WTC11 (cell line): ENCODE measurements at regions of chr17 and their contacts with region 1.

Region 1: DNA sequence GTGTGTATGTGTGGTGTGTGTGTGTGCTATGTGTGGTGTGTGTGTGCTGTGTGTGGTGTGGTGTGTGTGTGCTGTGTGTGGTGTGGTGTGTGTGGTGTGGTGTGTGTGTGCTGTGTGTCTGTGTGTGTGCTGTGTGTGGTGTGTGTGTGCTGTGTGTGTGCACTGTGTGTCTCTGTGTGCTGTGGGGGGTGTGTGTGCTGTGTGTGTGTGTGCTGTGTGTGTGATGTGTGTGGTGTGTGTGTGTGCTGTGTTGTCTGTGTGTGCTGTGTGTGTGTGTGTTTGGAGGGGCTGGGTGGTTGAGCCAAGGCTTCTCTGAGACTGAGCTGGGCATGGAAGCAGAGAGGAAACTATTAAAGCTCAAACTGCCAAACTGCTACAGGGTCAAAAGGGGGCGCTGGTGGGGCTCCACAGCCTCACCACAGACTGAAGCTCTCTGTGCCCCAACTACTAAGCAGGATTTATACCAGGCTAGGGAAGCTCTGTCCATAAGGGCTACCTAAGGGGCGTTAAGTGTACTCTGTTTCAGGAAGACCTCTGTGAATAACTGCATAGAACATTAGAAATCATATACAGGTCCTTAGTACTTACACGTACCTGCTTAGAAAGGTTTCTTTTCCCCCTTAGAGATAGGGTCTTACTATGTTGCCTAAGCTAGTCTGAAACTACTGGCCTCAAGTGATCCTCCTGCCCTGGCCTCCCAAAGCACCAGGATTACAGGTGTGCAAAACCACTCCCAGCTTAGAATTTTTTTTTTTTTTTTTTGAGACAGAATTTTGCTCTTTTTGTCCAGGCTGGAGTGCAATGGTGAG is 27.8 kb upstream of the GHDC start:
- DNase-seq: peak; percentile 61
- ATAC-seq: peak; percentile 93
- H3K4me3 Mint-ChIP-seq: no peak overlapping the region
- H3K27ac Mint-ChIP-seq: no peak overlapping the region
- H3K4me1 Mint-ChIP-seq: no peaks in the 10 kb centered on the region
- H3K27me3 Mint-ChIP-seq: no peaks in the 10 kb centered on the region
- CTCF ChIP-seq: peak; percentile 59; the same call in 1 of the 2 replicates

Region 2: GRCh38 chr17:41894791-41895331 is 327.3 kb before region 1 on chr17:
- CTCF ChIA-PET with region 1: no interaction called
- POLR2A ChIA-PET with region 1: no interaction called
- DNase-seq: no peak
- ATAC-seq: no peak
- H3K4me3 Mint-ChIP-seq: no peak overlapping the region
- H3K27ac Mint-ChIP-seq: no peak overlapping the region
- H3K4me1 Mint-ChIP-seq: no peaks in the 10 kb centered on the region
- H3K27me3 Mint-ChIP-seq: no peaks in the 10 kb centered on the region; the same call in 1 of the 2 replicates
- CTCF ChIP-seq: no peak

Region 3: DNA sequence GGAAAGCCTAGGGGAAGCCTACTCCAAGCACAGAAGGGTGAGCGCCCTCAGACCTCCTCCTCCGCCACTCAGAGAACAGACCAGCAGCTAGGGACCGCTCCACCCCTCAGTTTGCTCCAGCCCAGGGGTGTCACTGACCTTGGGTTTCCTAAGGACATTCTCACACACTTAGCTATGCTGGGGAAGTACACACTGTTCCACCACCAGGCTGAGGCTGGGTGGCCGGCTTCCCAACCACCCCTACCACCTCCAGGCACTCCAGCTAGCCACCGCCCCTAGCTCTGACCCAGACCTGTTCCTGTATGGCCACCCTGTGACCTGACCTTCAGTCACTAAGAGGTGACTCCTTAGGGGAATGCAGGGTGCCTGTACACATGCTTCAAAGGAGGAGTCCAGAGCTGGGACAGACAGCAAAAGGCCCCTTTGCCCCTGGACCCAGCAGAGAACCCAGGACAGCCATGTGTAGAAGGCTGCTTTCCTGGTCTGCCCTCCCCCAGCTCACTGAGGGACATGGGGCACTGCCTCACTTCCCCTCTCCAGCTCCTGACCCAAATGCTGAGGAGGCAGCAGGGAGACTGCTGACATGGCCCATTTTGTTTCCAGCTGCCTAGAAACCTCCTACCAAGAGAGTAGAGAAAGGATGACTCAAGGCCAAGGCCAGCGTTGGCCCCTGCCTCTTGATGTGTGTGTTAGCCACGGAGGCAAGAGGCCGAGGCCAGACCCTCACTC is 92.9 kb before region 1 on chr17:
- CTCF ChIA-PET with region 1: interaction called, 10 read pairs
- POLR2A ChIA-PET with region 1: no interaction called
- DNase-seq: no peak
- ATAC-seq: no peak
- H3K4me3 Mint-ChIP-seq: no peak overlapping the region
- H3K27ac Mint-ChIP-seq: no peak overlapping the region
- H3K4me1 Mint-ChIP-seq: peaks cover 20% of the 10 kb centered on the region
- H3K27me3 Mint-ChIP-seq: no peaks in the 10 kb centered on the region
- CTCF ChIP-seq: no peak

Region 4: GRCh38 chr17:42193969-42194899 is 27.9 kb before region 1 on chr17 and contains the start of gene GHDC:
- CTCF ChIA-PET with region 1: interaction called, 55 read pairs
- POLR2A ChIA-PET with region 1: no interaction called
- DNase-seq: peak; percentile 71
- ATAC-seq: peak; percentile 92
- H3K4me3 Mint-ChIP-seq: peak within 1 kb of the TSS; percentile 63
- H3K27ac Mint-ChIP-seq: peak within 1 kb of the TSS; percentile 78; the same call in 1 of the 2 replicates
- H3K4me1 Mint-ChIP-seq: peaks cover 16% of the 10 kb centered on the region
- H3K27me3 Mint-ChIP-seq: no peaks in the 10 kb centered on the region
- CTCF ChIP-seq: no peak
- total RNA-seq, gene GHDC: 7.5 to 11.1 TPM (median 11.1 TPM) in 3 replicates

Region 5: GRCh38 chr17:42248351-42249179 is 26.4 kb after region 1 on chr17:
- CTCF ChIA-PET with region 1: interaction called, 38 read pairs
- POLR2A ChIA-PET with region 1: no interaction called
- DNase-seq: no peak
- ATAC-seq: no peak
- H3K4me3 Mint-ChIP-seq: no peak overlapping the region
- H3K27ac Mint-ChIP-seq: peak overlapping the region; percentile 14
- H3K4me1 Mint-ChIP-seq: peaks cover 26% of the 10 kb centered on the region
- H3K27me3 Mint-ChIP-seq: no peaks in the 10 kb centered on the region
- CTCF ChIP-seq: no peak

Region 6: GRCh38 chr17:42287926-42288802 is 66.0 kb after region 1 on chr17 and contains the start of gene STAT5A:
- CTCF ChIA-PET with region 1: interaction called, 20 read pairs
- POLR2A ChIA-PET with region 1: no interaction called
- DNase-seq: peak; percentile 71
- ATAC-seq: peak; percentile 79
- H3K4me3 Mint-ChIP-seq: peak within 1 kb of the TSS; percentile 70
- H3K27ac Mint-ChIP-seq: peak within 1 kb of the TSS; percentile 60; the same call in 1 of the 2 replicates
- H3K4me1 Mint-ChIP-seq: peaks cover 16% of the 10 kb centered on the region
- H3K27me3 Mint-ChIP-seq: peaks cover 35% of the 10 kb centered on the region
- CTCF ChIP-seq: no peak
- total RNA-seq, gene STAT5A: 6.6 to 10.9 TPM (median 9.7 TPM) in 3 replicates

Region 7: DNA sequence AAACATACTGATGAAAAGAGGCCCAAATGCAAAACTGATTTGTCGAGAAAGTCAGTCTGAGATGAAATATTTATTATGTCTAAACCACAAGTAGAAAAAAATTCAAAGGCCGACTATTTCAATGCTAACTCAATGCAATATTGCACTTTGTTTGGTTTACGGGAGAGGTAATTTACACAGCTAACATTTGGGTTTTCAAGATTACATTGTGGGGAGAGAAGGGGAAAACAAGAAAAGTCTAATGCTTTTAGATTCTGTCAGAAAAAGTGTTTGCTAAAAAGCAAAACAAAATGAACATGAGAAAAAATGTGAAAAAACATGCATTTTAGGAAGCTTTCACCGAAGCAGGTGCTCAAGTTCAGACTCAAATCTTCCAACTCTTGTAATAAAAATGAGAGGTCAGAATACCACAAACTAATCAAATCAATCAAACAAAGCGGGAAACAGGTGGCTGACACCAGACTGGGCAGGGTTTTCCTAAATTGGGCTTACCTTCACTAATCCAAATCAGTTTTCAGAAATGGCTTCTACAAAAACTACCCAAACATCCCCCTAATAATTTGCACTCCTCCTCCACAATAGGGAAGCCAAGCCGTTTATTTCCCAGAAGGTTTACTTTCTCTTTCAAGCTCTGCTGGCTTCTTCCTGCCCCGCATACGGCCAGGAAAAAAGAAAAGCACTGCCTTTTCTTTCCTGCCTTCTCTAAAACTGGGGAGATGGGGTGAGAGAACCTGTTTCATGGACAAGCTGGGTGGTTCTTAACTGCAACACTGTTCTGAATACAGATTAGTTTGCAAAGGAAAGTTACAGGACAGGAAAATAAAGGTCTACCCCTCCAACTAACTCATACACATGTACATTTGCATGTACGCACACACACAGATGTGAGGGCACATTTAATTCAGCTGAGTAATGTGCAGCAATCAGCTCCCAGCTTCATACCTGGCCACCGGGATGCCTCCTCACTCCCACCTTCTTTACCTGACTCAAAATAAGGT is 156.8 kb after region 1 on chr17:
- CTCF ChIA-PET with region 1: no interaction called
- POLR2A ChIA-PET with region 1: no interaction called
- DNase-seq: no peak
- ATAC-seq: peak; percentile 60
- H3K4me3 Mint-ChIP-seq: peak overlapping the region; percentile 29
- H3K27ac Mint-ChIP-seq: peak overlapping the region; percentile 95
- H3K4me1 Mint-ChIP-seq: peaks cover 60% of the 10 kb centered on the region
- H3K27me3 Mint-ChIP-seq: no peaks in the 10 kb centered on the region
- CTCF ChIP-seq: no peak

Region 8: GRCh38 chr17:42405963-42406495 is 183.9 kb after region 1 on chr17:
- CTCF ChIA-PET with region 1: interaction called, 59 read pairs
- POLR2A ChIA-PET with region 1: no interaction called
- DNase-seq: peak; percentile 92
- ATAC-seq: peak; percentile 66
- H3K4me3 Mint-ChIP-seq: no peak overlapping the region
- H3K27ac Mint-ChIP-seq: no peak overlapping the region
- H3K4me1 Mint-ChIP-seq: peaks cover 43% of the 10 kb centered on the region
- H3K27me3 Mint-ChIP-seq: no peaks in the 10 kb centered on the region; the same call in 1 of the 2 replicates
- CTCF ChIP-seq: peak; percentile 35; the same call in 1 of the 2 replicates